ENCODE measurements at regions of chr1 and their contacts with region 1.

Region 1: GRCh38 chr1:27154991-27155781 is at the start of gene SLC9A1:
- DNase-seq: peak; percentile 76
- ATAC-seq: peak; percentile 97
- H3K4me3 ChIP-seq: peak within 1 kb of the TSS; percentile 62 to 78
- H3K27ac ChIP-seq: peak within 1 kb of the TSS; percentile 53
- H3K4me1 ChIP-seq: peaks cover 19 to 30% of the 10 kb centered on the region in 2 experiments; a peak in 3 of 4 replicates
- H3K27me3 ChIP-seq: no peaks in the 10 kb centered on the region
- CTCF ChIP-seq: peak; percentile 76 to 90 (median 77)
- POLR2A ChIP-seq: peak; percentile 99
- RAD21 ChIP-seq: peak; percentile 28
- total RNA-seq, gene SLC9A1: 21.7 TPM

Region 2: DNA sequence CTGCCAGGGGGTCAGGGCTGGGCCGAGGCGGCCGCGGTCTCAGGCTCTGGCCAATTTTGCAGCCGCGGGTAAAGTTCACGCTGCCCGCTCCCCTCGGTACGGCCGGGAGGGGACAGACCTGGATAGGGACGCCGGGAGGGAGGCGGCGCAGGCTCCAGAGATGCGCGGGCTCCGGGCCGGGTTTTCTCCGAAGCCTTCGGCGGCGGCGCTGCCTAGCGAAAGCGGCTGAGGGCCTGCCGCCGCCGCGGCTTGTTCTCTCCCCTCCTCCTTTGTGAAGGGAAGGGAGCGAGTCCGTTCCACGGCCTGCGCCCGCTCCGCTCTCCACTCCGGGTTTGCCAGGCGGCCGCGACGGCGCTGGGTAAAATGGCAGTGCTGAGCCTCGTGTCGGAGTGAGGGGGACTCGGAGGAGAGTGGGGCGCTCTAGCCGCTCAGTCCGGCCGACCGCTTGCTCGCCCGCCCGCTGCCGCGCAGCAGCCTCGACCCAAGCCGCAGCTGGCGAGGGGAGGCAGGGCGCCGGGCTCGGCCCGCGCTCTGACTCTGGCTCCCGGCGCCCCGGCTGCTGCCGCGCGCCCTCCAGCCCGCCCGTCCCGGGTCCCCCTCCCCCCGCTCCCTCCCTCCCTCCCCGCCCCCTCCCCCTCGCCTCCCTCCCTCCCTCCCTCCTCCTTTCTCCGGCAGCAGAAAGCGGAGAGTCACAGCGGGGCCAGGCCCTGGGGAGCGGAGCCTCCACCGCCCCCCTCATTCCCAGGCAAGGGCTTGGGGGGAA is 459.6 kb before region 1 on chr1 and contains the start of gene ARID1A:
- CTCF ChIA-PET with region 1: no interaction called
- POLR2A ChIA-PET with region 1: no interaction called
- RAD21 ChIA-PET with region 1: no interaction called
- intact Hi-C with region 1: no loop called
- DNase-seq: peak; percentile 92
- ATAC-seq: peak; percentile 51
- H3K4me3 ChIP-seq: peak within 1 kb of the TSS; percentile 60 to 64
- H3K27ac ChIP-seq: peak within 1 kb of the TSS; percentile 94
- H3K4me1 ChIP-seq: peaks cover 27 to 76% of the 10 kb centered on the region in 2 experiments
- H3K27me3 ChIP-seq: no peaks in the 10 kb centered on the region
- CTCF ChIP-seq: no peak
- POLR2A ChIP-seq: no peak
- RAD21 ChIP-seq: no peak
- total RNA-seq, gene ARID1A: 62.8 TPM

Region 3: GRCh38 chr1:27111626-27112573 is 43.3 kb before region 1 on chr1:
- CTCF ChIA-PET with region 1: interaction called, 11 read pairs
- POLR2A ChIA-PET with region 1: interaction called, 29 read pairs
- RAD21 ChIA-PET with region 1: interaction called, 3 read pairs
- intact Hi-C with region 1: no loop called
- DNase-seq: peak; percentile 73
- ATAC-seq: peak; percentile 91
- H3K4me3 ChIP-seq: peak overlapping the region in 1 of 2 experiments; percentile 31; a peak in 2 of 4 replicates
- H3K27ac ChIP-seq: peak overlapping the region; percentile 62
- H3K4me1 ChIP-seq: peaks cover 17 to 23% of the 10 kb centered on the region in 2 experiments
- H3K27me3 ChIP-seq: no peaks in the 10 kb centered on the region
- CTCF ChIP-seq: peak in 2 of 3 experiments; percentile 12 to 40; a peak in 2 of 6 replicates
- POLR2A ChIP-seq: no peak
- RAD21 ChIP-seq: peak; percentile 83

Region 4: GRCh38 chr1:27122652-27123051 is 32.5 kb before region 1 on chr1:
- CTCF ChIA-PET with region 1: interaction called, 3 read pairs
- POLR2A ChIA-PET with region 1: interaction called, 14 read pairs
- RAD21 ChIA-PET with region 1: no interaction called
- intact Hi-C with region 1: no loop called
- DNase-seq: no peak
- ATAC-seq: peak; percentile 99
- H3K4me3 ChIP-seq: 0 out of 4 replicates have a peak overlapping the region, but pooled peaks of 1 of the 2 experiments have one; percentile 2
- H3K27ac ChIP-seq: peak overlapping the region; percentile 60
- H3K4me1 ChIP-seq: peaks cover 17 to 28% of the 10 kb centered on the region in 2 experiments
- H3K27me3 ChIP-seq: no peaks in the 10 kb centered on the region
- CTCF ChIP-seq: no peak
- POLR2A ChIP-seq: no peak
- RAD21 ChIP-seq: no peak

Region 5: DNA sequence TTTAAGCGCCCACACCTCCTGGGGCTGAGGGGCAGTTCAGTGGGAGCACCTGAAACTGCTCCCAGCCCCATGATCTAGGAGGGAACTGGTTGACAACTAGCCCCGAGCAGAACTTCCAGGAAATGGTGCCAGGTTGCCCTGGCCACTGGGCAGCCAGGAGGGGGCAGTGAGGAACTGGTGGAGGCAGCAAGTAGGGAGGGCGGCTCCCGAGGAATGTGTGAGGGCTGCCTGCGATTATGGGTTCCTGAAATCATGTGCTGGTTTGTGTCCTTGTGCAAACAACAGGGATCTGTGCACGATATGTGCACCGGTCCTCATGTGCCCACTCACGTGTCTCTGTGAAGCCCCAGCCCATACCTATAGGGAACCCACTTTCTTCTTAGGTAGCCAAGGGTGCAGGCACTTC is 247.2 kb after region 1 on chr1:
- CTCF ChIA-PET with region 1: no interaction called
- POLR2A ChIA-PET with region 1: no interaction called
- RAD21 ChIA-PET with region 1: no interaction called
- intact Hi-C with region 1: no loop called
- DNase-seq: no peak
- ATAC-seq: peak; percentile 71
- H3K4me3 ChIP-seq: no peak overlapping the region
- H3K27ac ChIP-seq: no peak overlapping the region
- H3K4me1 ChIP-seq: peaks cover 0 to 10% of the 10 kb centered on the region in 2 experiments; a peak in 2 of 4 replicates
- H3K27me3 ChIP-seq: no peaks in the 10 kb centered on the region
- CTCF ChIP-seq: peak; percentile 40 to 54 (median 43); a peak in 4 of 6 replicates
- POLR2A ChIP-seq: no peak
- RAD21 ChIP-seq: peak; percentile 63